PC-9 (cell line): ENCODE measurements at regions of chr7 and their contacts with region 1.

Region 1: DNA sequence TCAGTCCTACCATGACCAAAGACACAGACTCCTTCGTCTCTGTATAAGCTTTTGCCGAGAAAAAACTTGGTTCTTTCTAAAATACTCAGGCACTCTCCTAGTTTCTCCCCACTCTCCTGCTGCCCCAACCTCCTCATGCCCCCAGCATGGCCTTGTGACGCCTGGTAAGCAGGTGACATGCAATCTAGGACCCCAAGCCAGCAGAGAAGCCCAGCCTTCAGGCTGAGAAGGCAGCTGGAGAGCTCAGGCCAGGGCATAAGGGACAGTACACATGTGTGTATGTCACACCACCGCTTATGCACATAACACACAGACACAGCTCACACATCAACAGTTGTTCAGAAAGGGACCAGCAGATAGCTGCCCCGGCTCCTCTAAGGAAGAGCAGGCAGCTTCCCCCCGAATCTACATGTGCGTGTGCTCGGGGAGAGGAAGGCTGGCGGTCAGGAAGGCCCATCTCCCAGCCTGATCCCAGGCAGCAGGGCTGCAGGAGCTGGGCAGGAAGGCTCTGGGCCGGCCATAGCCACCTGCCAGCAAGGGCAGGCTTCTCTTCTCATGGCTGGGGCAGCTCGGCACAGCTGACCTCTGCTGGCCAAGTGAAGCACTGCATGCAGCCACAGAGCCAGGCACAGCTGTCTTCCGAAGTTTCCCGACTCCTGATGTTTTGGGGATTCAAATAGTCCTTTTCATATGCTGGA is 8.5 kb downstream of the DDX56 start:
- DNase-seq: peak in 1 of 2 experiments; percentile 78
- H3K4me3 ChIP-seq: no peak overlapping the region
- H3K27ac ChIP-seq: no peak overlapping the region
- H3K4me1 ChIP-seq: peaks cover 16% of the 10 kb centered on the region
- H3K27me3 ChIP-seq: no peaks in the 10 kb centered on the region
- CTCF ChIP-seq: peak; percentile 100

Region 2: GRCh38 chr7:44065436-44066118 is 499.7 kb before region 1 on chr7 and contains the start of gene PGAM2:
- CTCF ChIA-PET with region 1: no interaction called
- POLR2A ChIA-PET with region 1: no interaction called
- intact Hi-C with region 1: no loop called
- DNase-seq: no peak
- H3K4me3 ChIP-seq: no peak within 1 kb of the TSS
- H3K27ac ChIP-seq: no peak within 1 kb of the TSS
- H3K4me1 ChIP-seq: peaks cover under 1% of the 10 kb centered on the region; the same call in 1 of the 2 replicates
- H3K27me3 ChIP-seq: no peaks in the 10 kb centered on the region
- CTCF ChIP-seq: no peak
- total RNA-seq, gene PGAM2: 4.2 and 9.7 TPM in 2 replicates

Region 3: GRCh38 chr7:44375236-44375699 is 190.0 kb before region 1 on chr7:
- CTCF ChIA-PET with region 1: no interaction called
- POLR2A ChIA-PET with region 1: no interaction called
- intact Hi-C with region 1: loop called (anchors 10 kb)
- DNase-seq: no peak
- H3K4me3 ChIP-seq: no peak overlapping the region
- H3K27ac ChIP-seq: no peak overlapping the region
- H3K4me1 ChIP-seq: peaks cover 43% of the 10 kb centered on the region
- H3K27me3 ChIP-seq: no peaks in the 10 kb centered on the region
- CTCF ChIP-seq: peak; percentile 59

Region 4: DNA sequence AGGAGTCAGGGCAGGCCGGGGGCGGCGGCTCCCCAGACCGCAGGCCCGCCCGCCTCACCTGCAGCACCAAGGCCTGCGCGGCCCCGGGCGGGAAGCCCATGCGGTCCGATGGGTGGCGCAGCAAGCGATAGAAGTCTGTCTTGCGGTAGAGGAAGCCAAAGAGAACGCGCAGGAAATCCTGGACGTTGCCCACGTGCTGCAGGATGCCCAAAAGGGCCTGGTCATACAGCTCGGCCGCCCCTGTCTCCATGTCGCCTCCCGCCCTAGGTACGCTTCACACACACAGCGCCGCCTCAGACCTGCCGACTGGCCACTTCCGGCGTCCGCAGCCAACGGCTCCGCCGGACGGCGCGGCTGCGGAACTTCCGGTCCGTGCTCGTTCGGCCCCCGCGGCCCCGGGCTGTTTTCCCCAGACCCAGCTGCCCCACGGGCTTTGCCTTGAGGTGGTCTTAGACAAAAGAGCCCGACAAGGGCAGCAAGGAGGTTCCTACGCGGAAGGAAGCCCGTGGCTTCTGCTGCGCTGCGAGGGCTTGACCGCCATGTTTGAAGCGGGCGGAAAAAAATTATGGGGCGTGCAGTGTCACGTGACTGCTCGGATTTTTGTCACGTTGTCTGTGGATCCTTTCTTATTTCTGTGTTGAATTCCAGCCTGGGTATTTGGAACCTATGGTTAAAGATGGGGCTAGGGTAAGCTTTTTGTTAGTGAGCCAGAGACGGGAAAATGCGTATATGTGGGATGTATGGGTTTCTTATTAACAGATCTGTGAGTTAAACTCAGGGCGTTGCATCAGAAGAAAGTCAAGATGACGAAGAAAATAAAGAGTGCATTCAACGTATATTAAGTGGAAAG is 74.7 kb before region 1 on chr7 and contains the start of gene NUDCD3:
- CTCF ChIA-PET with region 1: interaction called, 7 read pairs
- POLR2A ChIA-PET with region 1: no interaction called
- intact Hi-C with region 1: loop called (anchors 1 kb)
- DNase-seq: peak; percentile 74 to 89
- H3K4me3 ChIP-seq: peak within 1 kb of the TSS; percentile 86
- H3K27ac ChIP-seq: peak within 1 kb of the TSS; percentile 92
- H3K4me1 ChIP-seq: peaks cover 27% of the 10 kb centered on the region
- H3K27me3 ChIP-seq: no peaks in the 10 kb centered on the region
- CTCF ChIP-seq: peak; percentile 38; the same call in 1 of the 2 replicates
- total RNA-seq, gene NUDCD3: 149 and 158 TPM in 2 replicates

Region 5: DNA sequence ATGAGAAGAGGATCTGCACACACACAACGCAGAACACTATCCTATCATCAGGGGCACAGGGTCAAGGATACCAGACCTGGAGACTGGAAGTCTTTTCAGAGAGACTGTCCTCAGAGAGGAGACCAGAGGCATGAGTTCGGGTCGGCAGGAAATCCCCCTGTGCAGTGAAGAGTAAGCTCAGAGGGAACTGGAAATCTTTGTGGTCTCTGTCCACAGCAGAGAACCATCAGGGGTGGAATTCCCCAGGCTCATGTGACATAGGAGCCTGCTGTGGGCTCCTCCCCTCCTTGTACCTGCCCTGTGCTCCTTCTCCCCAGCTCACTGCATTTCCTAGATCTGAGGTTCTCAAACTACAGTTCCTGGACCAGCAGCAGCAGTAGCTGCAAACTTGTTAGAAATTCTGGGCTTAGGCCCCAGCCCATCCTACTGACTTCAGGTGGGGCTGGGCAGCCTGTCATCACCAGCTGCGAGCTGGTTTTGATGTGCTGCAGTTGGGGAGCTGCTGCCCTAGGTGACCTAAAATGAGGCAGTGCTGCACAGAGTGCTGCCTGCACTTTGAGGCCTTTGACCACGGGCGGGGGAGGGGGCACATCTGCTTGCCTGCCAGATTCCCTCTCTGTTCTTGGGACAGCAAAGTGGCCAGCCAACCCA is 185.8 kb after region 1 on chr7:
- CTCF ChIA-PET with region 1: no interaction called
- POLR2A ChIA-PET with region 1: no interaction called
- intact Hi-C with region 1: no loop called
- DNase-seq: peak in 1 of 2 experiments; percentile 32
- H3K4me3 ChIP-seq: no peak overlapping the region
- H3K27ac ChIP-seq: no peak overlapping the region
- H3K4me1 ChIP-seq: peaks cover 29% of the 10 kb centered on the region
- H3K27me3 ChIP-seq: no peaks in the 10 kb centered on the region
- CTCF ChIP-seq: no peak